HEK293 (cell line): ENCODE measurements at regions of chr2 and their contacts with region 1.

Region 1: DNA sequence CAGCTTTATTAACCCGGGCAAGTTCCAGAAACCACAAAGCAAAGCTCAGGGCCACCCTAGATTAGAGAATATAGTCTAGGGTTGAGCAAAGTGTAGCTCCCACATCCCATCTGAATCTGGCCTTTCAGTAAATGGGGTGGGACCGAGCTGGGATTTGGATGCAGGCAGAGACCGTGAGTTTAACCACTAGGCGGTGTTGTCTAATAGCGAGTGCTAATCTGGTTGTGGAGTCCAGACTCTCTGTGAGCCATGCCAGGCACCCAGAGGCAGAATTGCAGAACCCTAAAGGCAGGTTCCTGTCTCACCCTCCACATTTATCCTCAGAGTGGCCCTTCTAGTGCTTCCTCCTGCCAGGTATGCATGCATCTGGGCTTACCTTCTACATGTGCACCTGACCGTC is 435.9 kb downstream of the TSN start:
- H3K4me3 ChIP-seq: no peak overlapping the region
- H3K27ac ChIP-seq: no peak overlapping the region
- H3K4me1 ChIP-seq: no peaks in the 10 kb centered on the region
- CTCF ChIP-seq: no peak

Region 2: GRCh38 chr2:122180972-122181371 is 10.4 kb before region 1 on chr2:
- CTCF ChIA-PET with region 1: interaction called, 12 read pairs
- POLR2A ChIA-PET with region 1: no interaction called
- H3K4me3 ChIP-seq: no peak overlapping the region
- H3K27ac ChIP-seq: no peak overlapping the region
- H3K4me1 ChIP-seq: no peaks in the 10 kb centered on the region
- CTCF ChIP-seq: no peak

Region 3: DNA sequence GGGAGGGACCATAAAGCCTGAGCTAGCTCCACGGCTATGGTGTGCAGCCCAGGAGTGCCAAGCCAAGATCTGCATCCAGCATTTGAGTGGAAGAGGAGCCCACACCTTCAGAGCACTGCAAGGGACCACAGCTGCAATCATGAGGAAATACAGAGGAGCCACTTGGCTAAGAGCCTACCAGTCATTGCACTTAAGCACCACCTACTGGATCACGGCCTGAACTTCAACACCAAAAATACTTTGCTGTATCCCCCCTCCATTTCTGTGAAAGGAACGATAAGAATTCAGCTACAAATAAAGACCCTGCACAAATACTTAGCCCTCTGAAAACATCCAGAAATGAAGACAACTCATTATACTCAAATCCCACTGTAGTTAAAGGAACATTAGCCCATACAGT is 109.4 kb after region 1 on chr2:
- CTCF ChIA-PET with region 1: no interaction called
- POLR2A ChIA-PET with region 1: no interaction called
- H3K4me3 ChIP-seq: no peak overlapping the region
- H3K27ac ChIP-seq: no peak overlapping the region
- H3K4me1 ChIP-seq: no peaks in the 10 kb centered on the region
- CTCF ChIP-seq: no peak